PC-3 (cell line): ENCODE measurements at regions of chr1 and their contacts with region 1.

Region 1: DNA sequence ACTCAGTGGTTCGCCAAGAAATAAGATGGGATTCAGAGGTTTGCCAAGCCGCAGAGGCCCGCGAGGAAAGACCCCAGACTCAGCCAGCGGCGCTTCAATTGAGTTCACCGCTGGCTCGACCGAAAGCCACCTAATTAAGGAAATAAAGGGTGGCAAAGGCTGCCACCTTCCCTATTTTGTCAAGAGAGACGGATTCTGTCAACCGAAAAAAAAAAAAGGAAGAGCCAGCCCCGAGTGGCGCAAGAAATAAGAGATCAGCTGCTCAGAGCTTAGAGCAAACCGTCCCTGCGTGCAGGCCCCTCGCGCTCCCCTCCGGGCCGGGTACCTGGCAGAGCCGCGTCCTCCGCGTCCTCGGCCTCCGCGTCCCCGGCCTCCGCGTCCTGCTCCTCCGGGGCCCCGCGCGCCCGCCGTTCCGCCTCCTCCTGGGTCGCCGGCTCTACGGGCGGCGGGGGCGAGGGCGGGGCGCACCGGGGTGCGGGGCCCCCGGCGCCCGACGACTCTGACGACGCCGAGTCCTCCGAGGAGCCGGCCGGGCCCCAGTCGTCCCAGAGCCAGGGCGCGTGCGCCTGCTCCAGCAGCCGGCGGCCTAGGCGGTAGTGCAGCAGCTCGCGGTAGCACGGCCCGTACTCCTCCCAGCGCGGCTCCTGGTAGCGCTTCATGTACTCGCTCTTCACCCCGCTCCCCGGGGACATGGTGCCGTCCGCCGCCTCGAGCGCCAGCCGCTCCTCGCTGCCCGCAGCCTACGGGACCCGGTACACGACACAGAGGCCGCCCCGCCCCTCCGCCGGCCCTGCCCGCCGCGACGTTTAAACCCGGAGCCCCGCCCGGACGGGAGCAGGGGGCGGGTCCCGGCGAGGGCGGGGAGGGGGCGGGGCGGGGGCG is 832 bp downstream of the CCSAP start:
- DNase-seq: peak; percentile 83
- ATAC-seq: peak; percentile 78
- H3K4me3 ChIP-seq: peak overlapping the region; percentile 96
- H3K27ac ChIP-seq: no peak overlapping the region
- H3K4me1 ChIP-seq: peaks cover 23% of the 10 kb centered on the region
- H3K27me3 ChIP-seq: no peaks in the 10 kb centered on the region
- CTCF ChIP-seq: no peak

Region 2: DNA sequence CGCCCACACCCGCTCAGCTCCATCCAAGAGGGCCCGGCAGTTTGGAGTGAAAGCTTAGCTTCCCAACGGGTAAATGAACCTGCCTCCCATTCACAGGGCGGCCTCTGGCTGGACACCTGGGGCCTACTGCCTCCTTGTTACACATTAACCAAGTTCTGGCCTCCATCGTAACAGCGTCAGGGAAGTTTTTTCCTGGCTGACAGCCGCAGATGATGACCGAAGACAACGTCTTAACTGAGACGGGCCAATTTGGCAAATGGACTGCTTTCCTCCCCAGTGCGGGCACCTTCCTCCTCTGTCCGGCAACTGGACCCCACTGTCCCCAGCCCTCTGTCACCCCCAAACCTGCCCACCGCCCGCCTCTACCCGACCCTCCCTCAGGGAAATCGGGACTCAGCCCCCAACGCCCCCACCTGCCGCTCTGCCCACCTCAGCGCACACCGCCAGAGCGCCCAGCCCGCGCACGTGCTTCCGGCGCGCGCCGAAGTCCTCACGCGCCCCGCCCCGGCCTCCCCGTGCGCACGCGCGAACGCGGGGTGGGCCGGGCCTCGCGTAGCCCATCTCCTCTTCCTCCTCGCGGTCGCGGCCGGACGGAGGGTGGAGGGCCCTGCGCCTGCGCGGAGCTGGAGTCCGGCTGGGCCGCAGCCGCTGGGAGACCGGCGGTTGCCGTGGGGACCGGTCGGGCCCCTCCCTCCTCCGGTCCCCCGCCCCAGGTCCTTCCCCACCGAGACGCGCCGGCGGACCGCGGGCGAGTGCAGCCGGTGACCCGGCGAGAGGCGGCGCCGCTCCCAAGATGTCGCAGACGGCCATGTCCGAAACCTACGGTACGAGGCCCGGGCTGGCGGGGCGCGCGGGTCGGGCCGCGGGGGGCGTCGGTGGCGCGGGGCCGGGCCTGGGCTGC is 71.2 kb before region 1 on chr1 and contains the start of gene RAB4A:
- CTCF ChIA-PET with region 1: no interaction called
- POLR2A ChIA-PET with region 1: no interaction called
- intact Hi-C with region 1: loop called (anchors 2 kb)
- DNase-seq: peak; percentile 89
- ATAC-seq: peak; percentile 79
- H3K4me3 ChIP-seq: peak within 1 kb of the TSS; percentile 84
- H3K27ac ChIP-seq: no peak within 1 kb of the TSS
- H3K4me1 ChIP-seq: peaks cover 27% of the 10 kb centered on the region
- H3K27me3 ChIP-seq: no peaks in the 10 kb centered on the region
- CTCF ChIP-seq: no peak
- total RNA-seq, gene RAB4A: 33.9 and 67.0 TPM in 2 replicates

Region 3: GRCh38 chr1:229287267-229287666 is 54.7 kb before region 1 on chr1:
- CTCF ChIA-PET with region 1: no interaction called
- POLR2A ChIA-PET with region 1: no interaction called
- intact Hi-C with region 1: no loop called
- DNase-seq: peak; percentile 80
- ATAC-seq: peak; percentile 98
- H3K4me3 ChIP-seq: no peak overlapping the region
- H3K27ac ChIP-seq: no peak overlapping the region
- H3K4me1 ChIP-seq: peaks cover 21% of the 10 kb centered on the region
- H3K27me3 ChIP-seq: no peaks in the 10 kb centered on the region
- CTCF ChIP-seq: no peak

Region 4: GRCh38 chr1:229325853-229326502 is 16.0 kb before region 1 on chr1:
- CTCF ChIA-PET with region 1: no interaction called
- POLR2A ChIA-PET with region 1: no interaction called
- intact Hi-C with region 1: no loop called
- DNase-seq: no peak
- ATAC-seq: no peak
- H3K4me3 ChIP-seq: no peak overlapping the region
- H3K27ac ChIP-seq: no peak overlapping the region
- H3K4me1 ChIP-seq: no peaks in the 10 kb centered on the region
- H3K27me3 ChIP-seq: no peaks in the 10 kb centered on the region
- CTCF ChIP-seq: no peak

Region 5: GRCh38 chr1:229388876-229389580 is 47.0 kb after region 1 on chr1:
- CTCF ChIA-PET with region 1: no interaction called
- POLR2A ChIA-PET with region 1: no interaction called
- intact Hi-C with region 1: loop called (anchors 5 kb)
- DNase-seq: peak; percentile 70
- ATAC-seq: peak; percentile 92
- H3K4me3 ChIP-seq: peak overlapping the region; percentile 8; the same call in 1 of the 2 replicates
- H3K27ac ChIP-seq: peak overlapping the region; percentile 10; the same call in 1 of the 2 replicates
- H3K4me1 ChIP-seq: peaks cover 18% of the 10 kb centered on the region
- H3K27me3 ChIP-seq: no peaks in the 10 kb centered on the region
- CTCF ChIP-seq: no peak

Region 6: DNA sequence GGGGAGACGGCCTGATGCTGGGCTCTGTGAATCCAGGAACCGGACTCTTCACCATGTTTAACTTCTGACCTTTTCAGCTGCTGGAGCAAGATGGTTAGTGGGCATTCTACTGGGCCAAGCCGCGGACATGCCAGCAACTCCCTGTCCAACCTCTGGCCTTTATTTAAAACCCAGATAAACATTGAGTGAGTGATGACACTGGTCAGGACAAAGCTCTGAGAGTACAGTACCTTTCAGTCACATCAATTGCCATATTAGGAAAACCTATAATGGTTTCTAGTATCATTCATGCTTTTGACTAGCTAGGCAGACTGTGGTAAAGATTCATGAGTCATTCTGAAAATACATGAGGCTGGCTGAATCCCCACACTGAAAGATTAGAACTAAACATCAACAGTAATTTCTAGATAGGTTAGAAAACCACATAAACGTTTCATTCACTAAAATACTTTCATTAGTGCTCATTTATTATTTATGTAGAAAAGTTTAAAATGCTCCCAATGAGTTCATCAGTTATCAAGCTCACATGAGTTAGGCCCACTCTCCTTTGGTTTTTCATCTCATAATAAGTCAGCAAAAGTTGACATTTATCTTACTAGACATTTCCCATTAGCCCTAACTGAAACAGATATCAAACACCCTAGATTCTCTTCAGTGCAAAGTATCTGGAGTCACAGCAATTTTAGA is 99.0 kb after region 1 on chr1:
- CTCF ChIA-PET with region 1: no interaction called
- POLR2A ChIA-PET with region 1: interaction called, 5 read pairs
- intact Hi-C with region 1: loop called (anchors 5 kb)
- DNase-seq: peak; percentile 78
- ATAC-seq: peak; percentile 90
- H3K4me3 ChIP-seq: no peak overlapping the region
- H3K27ac ChIP-seq: peak overlapping the region; percentile 52
- H3K4me1 ChIP-seq: peaks cover 19% of the 10 kb centered on the region
- H3K27me3 ChIP-seq: no peaks in the 10 kb centered on the region
- CTCF ChIP-seq: no peak